IMR-90 (cell line): ENCODE measurements at regions of chr6 and their contacts with region 1.

Region 1: GRCh38 chr6:56637640-56638039 is 5.0 kb downstream of the DST start:
- DNase-seq: peak; percentile 80
- ATAC-seq: peak; percentile 81
- H3K4me3 ChIP-seq: no peak overlapping the region
- H3K27ac ChIP-seq: no peak overlapping the region
- H3K4me1 ChIP-seq: peaks cover 5% of the 10 kb centered on the region
- H3K27me3 ChIP-seq: no peaks in the 10 kb centered on the region
- CTCF ChIP-seq: peak; percentile 74
- POLR2A ChIP-seq: no peak
- RAD21 ChIP-seq: peak; percentile 78

Region 2: DNA sequence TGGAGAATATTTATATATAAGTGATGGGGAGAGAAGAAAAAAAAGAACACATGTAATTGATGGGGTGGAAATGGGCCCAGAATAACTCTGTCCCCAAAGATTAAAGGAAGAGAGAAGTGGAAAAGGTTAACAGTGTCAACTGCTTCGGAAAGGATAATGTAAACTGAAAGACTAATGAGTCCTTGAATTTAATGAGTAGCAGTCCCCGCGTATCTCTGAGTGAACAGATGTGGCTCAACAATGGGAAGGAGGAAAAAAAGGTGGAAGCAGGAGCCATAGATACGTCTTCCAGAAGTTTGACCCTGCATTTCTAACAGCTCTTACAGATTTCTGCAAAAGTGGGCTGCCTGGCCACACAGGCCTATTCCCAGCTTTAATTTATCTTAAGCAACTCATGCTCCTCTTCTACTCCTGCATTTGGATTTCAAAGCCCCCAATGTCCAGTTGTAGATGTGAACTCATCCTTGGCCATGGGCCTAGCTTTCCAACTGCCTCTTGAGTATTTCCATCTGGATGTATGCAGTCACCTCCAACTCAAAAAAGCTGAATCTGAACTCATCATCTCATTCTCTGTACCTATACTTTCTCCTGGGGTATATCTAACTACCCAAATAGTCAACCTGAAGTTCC is 56.2 kb before region 1 on chr6:
- CTCF ChIA-PET with region 1: no interaction called
- POLR2A ChIA-PET with region 1: no interaction called
- dilution Hi-C with region 1: no loop called
- in situ Hi-C with region 1: no loop called
- intact Hi-C with region 1: no loop called
- DNase-seq: peak; percentile 50
- ATAC-seq: peak; percentile 25
- H3K4me3 ChIP-seq: no peak overlapping the region
- H3K27ac ChIP-seq: 0 out of 2 replicates have a peak overlapping the region, but pooled peaks have one; percentile 7
- H3K4me1 ChIP-seq: peaks cover 8% of the 10 kb centered on the region; the same call in 1 of the 2 replicates
- H3K27me3 ChIP-seq: no peaks in the 10 kb centered on the region
- CTCF ChIP-seq: no peak
- POLR2A ChIP-seq: no peak
- RAD21 ChIP-seq: no peak

Region 3: GRCh38 chr6:56699066-56699654 is 61.5 kb after region 1 on chr6:
- CTCF ChIA-PET with region 1: no interaction called
- POLR2A ChIA-PET with region 1: no interaction called
- dilution Hi-C with region 1: no loop called
- in situ Hi-C with region 1: loop called (anchors 5 kb)
- intact Hi-C with region 1: no loop called
- DNase-seq: peak; percentile 53
- ATAC-seq: peak; percentile 74
- H3K4me3 ChIP-seq: no peak overlapping the region
- H3K27ac ChIP-seq: no peak overlapping the region
- H3K4me1 ChIP-seq: peaks cover 4% of the 10 kb centered on the region
- H3K27me3 ChIP-seq: no peaks in the 10 kb centered on the region
- CTCF ChIP-seq: peak; percentile 55
- POLR2A ChIP-seq: no peak
- RAD21 ChIP-seq: peak; percentile 46

Region 4: GRCh38 chr6:56843573-56844349 is 206.1 kb after region 1 on chr6:
- CTCF ChIA-PET with region 1: no interaction called
- POLR2A ChIA-PET with region 1: no interaction called
- dilution Hi-C with region 1: no loop called
- in situ Hi-C with region 1: loop called (anchors 10 kb)
- intact Hi-C with region 1: no loop called
- DNase-seq: peak; percentile 73
- ATAC-seq: peak; percentile 79
- H3K4me3 ChIP-seq: peak overlapping the region; percentile 92
- H3K27ac ChIP-seq: peak overlapping the region; percentile 82
- H3K4me1 ChIP-seq: peaks cover 2% of the 10 kb centered on the region; the same call in 1 of the 2 replicates
- H3K27me3 ChIP-seq: no peaks in the 10 kb centered on the region
- CTCF ChIP-seq: peak; percentile 65
- POLR2A ChIP-seq: no peak
- RAD21 ChIP-seq: peak; percentile 65

Region 5: GRCh38 chr6:56955171-56956045 is 317.8 kb after region 1 on chr6:
- CTCF ChIA-PET with region 1: no interaction called
- POLR2A ChIA-PET with region 1: no interaction called
- dilution Hi-C with region 1: no loop called
- in situ Hi-C with region 1: no loop called
- intact Hi-C with region 1: loop called (anchors 10 kb)
- DNase-seq: peak; percentile 91
- ATAC-seq: peak; percentile 78
- H3K4me3 ChIP-seq: peak overlapping the region; percentile 88
- H3K27ac ChIP-seq: peak overlapping the region; percentile 73
- H3K4me1 ChIP-seq: peaks cover 12% of the 10 kb centered on the region
- H3K27me3 ChIP-seq: no peaks in the 10 kb centered on the region
- CTCF ChIP-seq: peak; percentile 94
- POLR2A ChIP-seq: no peak; the same call in 1 of the 2 replicates
- RAD21 ChIP-seq: peak; percentile 72